PC-3 (cell line): ENCODE measurements at regions of chr2 and their contacts with region 1.

Region 1: DNA sequence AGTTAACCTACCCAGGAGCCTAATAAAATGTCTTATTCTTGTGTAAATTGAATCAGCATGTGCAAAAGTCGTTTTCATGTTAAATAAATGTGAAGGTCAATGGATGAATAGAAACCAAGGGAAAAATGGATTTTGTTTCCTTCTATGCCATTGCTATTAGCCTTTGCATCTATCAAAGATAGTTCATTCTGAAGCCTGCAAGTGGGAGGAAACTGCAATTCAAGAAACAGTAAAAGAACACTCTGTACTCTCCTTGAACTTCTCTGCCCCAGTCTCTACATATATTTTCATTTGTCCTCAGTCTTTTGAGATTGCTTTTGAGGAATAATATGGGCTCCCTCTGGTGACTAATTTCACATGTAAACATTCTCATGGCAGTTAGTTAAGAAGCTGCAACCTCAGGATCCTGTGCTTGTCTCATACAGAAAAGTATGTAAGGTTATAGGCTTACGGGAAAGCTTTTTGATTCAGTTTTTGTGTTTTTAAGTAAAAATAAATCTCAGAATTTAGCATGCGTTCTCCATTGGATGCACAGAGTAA is 1590.0 kb upstream of the LRRTM1 start:
- DNase-seq: peak; percentile 66
- ATAC-seq: peak; percentile 79
- H3K4me3 ChIP-seq: no peak overlapping the region
- H3K27ac ChIP-seq: no peak overlapping the region
- H3K4me1 ChIP-seq: peaks cover 16% of the 10 kb centered on the region; the same call in 1 of the 2 replicates
- H3K27me3 ChIP-seq: no peaks in the 10 kb centered on the region
- CTCF ChIP-seq: peak; percentile 61

Region 2: DNA sequence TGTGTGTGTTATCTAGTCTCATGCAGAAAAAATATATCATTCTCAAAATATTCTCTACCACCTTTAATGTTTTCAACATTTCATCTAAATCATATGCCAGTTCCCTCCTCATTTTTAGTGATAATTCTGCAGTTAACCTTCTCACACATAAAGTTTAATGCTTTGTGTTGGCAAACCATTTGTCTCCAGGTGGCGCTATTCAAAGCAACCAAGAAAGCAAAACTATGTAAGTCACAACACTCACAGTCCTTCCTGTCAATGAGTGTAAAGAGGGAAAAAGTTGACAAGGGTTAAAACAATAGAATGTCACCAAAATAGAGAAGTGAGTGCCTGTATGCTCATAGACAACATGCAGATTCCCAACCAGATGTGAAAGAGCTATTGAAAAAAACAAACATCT is 628.4 kb before region 1 on chr2:
- CTCF ChIA-PET with region 1: no interaction called
- POLR2A ChIA-PET with region 1: no interaction called
- intact Hi-C with region 1: loop called (anchors 10 kb)
- DNase-seq: peak; percentile 53
- ATAC-seq: no peak
- H3K4me3 ChIP-seq: no peak overlapping the region
- H3K27ac ChIP-seq: no peak overlapping the region
- H3K4me1 ChIP-seq: peaks cover 9% of the 10 kb centered on the region; the same call in 1 of the 2 replicates
- H3K27me3 ChIP-seq: no peaks in the 10 kb centered on the region
- CTCF ChIP-seq: peak; percentile 78

Region 3: GRCh38 chr2:81324046-81324445 is 570.5 kb before region 1 on chr2:
- CTCF ChIA-PET with region 1: interaction called, 3 read pairs
- POLR2A ChIA-PET with region 1: no interaction called
- intact Hi-C with region 1: loop called (anchors 2 kb)
- DNase-seq: peak; percentile 59
- ATAC-seq: peak; percentile 54
- H3K4me3 ChIP-seq: no peak overlapping the region
- H3K27ac ChIP-seq: no peak overlapping the region
- H3K4me1 ChIP-seq: no peaks in the 10 kb centered on the region
- H3K27me3 ChIP-seq: no peaks in the 10 kb centered on the region
- CTCF ChIP-seq: peak; percentile 68

Region 4: DNA sequence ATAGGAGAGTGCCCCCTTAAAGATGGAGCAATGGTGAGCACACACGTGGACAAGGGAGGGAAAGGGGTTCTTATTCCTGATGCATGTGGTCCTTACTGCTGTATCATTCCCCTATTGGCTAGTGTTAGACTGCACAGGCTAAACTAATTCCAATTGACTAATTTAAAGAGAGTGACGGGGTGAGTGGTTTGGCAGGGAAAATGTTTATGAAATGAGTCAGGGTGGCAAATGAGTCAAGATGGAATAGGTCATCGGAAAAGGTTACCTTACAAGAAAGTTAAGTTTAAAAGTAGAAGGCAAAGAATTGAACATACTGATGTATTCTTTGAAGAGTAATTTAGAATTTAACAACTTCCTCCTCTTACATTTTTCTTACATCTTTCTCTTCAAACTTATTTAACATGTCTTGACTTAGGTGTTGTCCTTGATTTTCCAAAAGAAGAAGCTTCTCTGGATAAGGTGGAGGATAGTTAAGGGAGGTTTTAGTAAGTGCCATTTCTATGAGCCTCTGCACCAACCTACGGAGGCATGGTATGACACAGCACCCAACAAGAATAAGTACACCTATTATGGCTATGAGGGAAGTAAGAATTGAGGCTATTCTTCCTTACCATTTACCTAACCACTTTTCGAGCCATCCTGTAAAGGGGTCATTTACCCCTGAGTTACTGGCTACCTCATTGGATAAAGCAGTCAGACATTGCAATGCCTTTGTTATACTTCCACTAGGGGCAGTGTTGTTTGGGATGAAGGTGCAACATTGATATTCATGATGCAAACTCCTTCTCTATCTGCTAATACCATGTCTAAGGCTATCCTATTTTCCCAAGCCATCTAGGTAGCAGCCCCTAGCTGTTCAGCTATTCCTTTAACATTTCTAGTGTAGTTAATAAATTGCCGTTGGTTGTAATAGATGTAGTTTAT is 244.2 kb before region 1 on chr2:
- CTCF ChIA-PET with region 1: no interaction called
- POLR2A ChIA-PET with region 1: no interaction called
- intact Hi-C with region 1: loop called (anchors 10 kb)
- DNase-seq: peak; percentile 91
- ATAC-seq: peak; percentile 79
- H3K4me3 ChIP-seq: no peak overlapping the region
- H3K27ac ChIP-seq: peak overlapping the region; percentile 90
- H3K4me1 ChIP-seq: peaks cover 27% of the 10 kb centered on the region
- H3K27me3 ChIP-seq: no peaks in the 10 kb centered on the region
- CTCF ChIP-seq: peak; percentile 48